Transverse colon (tissue), 4 donors: ENCODE measurements at regions of chr5 and their contacts with region 1.

Region 1: GRCh38 chr5:52007230-52007858 is 624.1 kb downstream of the ISL1 start:
- DNase-seq: no peak
- H3K4me3 ChIP-seq: no peak overlapping the region
- H3K27ac ChIP-seq: no peak overlapping the region
- H3K4me1 ChIP-seq: no peaks in the 10 kb centered on the region
- H3K27me3 ChIP-seq: no peaks in the 10 kb centered on the region
- CTCF ChIP-seq: peak; percentile 32 to 58 (median 52)
- EP300 ChIP-seq: no peak
- POLR2A ChIP-seq: no peak

Region 2: GRCh38 chr5:50962934-50963872 is 1044.1 kb before region 1 on chr5:
- in situ Hi-C with region 1: loop called (anchors 10 to 25 kb)
- intact Hi-C with region 1: no loop called
- DNase-seq: peak; percentile 63
- H3K4me3 ChIP-seq: peak overlapping the region; percentile 20 to 43 (median 30)
- H3K27ac ChIP-seq: no peak overlapping the region
- H3K4me1 ChIP-seq: peaks cover 7 to 31% (median 25%) of the 10 kb centered on the region in 4 donors
- H3K27me3 ChIP-seq: peaks cover 72% of the 10 kb centered on the region
- CTCF ChIP-seq: peak; percentile 80 to 92 (median 88)
- EP300 ChIP-seq: no peak
- POLR2A ChIP-seq: no peak